ENCODE measurements at regions of chr6 and their contacts with region 1.

Region 1: GRCh38 chr6:47733879-47734558 is 35.6 kb downstream of the ADGRF4 start:
- DNase-seq: peak in 1 of 2 experiments; percentile 54
- H3K4me3 ChIP-seq: no peak overlapping the region
- H3K4me3 Mint-ChIP-seq: no peak overlapping the region
- H3K27ac Mint-ChIP-seq: no peak overlapping the region
- H3K4me1 ChIP-seq: no peaks in the 10 kb centered on the region
- H3K4me1 Mint-ChIP-seq: no peaks in the 10 kb centered on the region
- H3K27me3 ChIP-seq: no peaks in the 10 kb centered on the region
- H3K27me3 Mint-ChIP-seq: no peaks in the 10 kb centered on the region
- CTCF ChIP-seq: peak; percentile 46 to 56

Region 2: GRCh38 chr6:47646567-47647088 is 87.4 kb before region 1 on chr6:
- CTCF ChIA-PET with region 1: interaction called, 3 read pairs
- POLR2A ChIA-PET with region 1: no interaction called
- intact Hi-C with region 1: loop called (anchors 1 kb)
- DNase-seq: no peak
- H3K4me3 ChIP-seq: no peak overlapping the region
- H3K4me3 Mint-ChIP-seq: no peak overlapping the region
- H3K27ac Mint-ChIP-seq: no peak overlapping the region
- H3K4me1 ChIP-seq: peaks cover 26% of the 10 kb centered on the region
- H3K4me1 Mint-ChIP-seq: peaks cover 15% of the 10 kb centered on the region
- H3K27me3 ChIP-seq: no peaks in the 10 kb centered on the region
- H3K27me3 Mint-ChIP-seq: no peaks in the 10 kb centered on the region
- CTCF ChIP-seq: peak in 1 of 2 experiments; percentile 8

Region 3: GRCh38 chr6:47690209-47690608 is 43.8 kb before region 1 on chr6:
- CTCF ChIA-PET with region 1: interaction called, 5 read pairs
- POLR2A ChIA-PET with region 1: no interaction called
- intact Hi-C with region 1: loop called (anchors 1 kb)
- DNase-seq: peak in 1 of 2 experiments; percentile 19
- H3K4me3 ChIP-seq: no peak overlapping the region
- H3K4me3 Mint-ChIP-seq: no peak overlapping the region
- H3K27ac Mint-ChIP-seq: no peak overlapping the region
- H3K4me1 ChIP-seq: no peaks in the 10 kb centered on the region
- H3K4me1 Mint-ChIP-seq: no peaks in the 10 kb centered on the region
- H3K27me3 ChIP-seq: no peaks in the 10 kb centered on the region
- H3K27me3 Mint-ChIP-seq: no peaks in the 10 kb centered on the region
- CTCF ChIP-seq: no peak

Region 4: GRCh38 chr6:47749757-47750156 is 15.7 kb after region 1 on chr6:
- CTCF ChIA-PET with region 1: no interaction called
- POLR2A ChIA-PET with region 1: no interaction called
- intact Hi-C with region 1: no loop called
- DNase-seq: no peak
- H3K4me3 ChIP-seq: no peak overlapping the region
- H3K4me3 Mint-ChIP-seq: no peak overlapping the region
- H3K27ac Mint-ChIP-seq: no peak overlapping the region
- H3K4me1 ChIP-seq: no peaks in the 10 kb centered on the region; the same call in 1 of the 2 replicates
- H3K4me1 Mint-ChIP-seq: peaks cover 7% of the 10 kb centered on the region
- H3K27me3 ChIP-seq: no peaks in the 10 kb centered on the region
- H3K27me3 Mint-ChIP-seq: no peaks in the 10 kb centered on the region
- CTCF ChIP-seq: no peak

Region 5: DNA sequence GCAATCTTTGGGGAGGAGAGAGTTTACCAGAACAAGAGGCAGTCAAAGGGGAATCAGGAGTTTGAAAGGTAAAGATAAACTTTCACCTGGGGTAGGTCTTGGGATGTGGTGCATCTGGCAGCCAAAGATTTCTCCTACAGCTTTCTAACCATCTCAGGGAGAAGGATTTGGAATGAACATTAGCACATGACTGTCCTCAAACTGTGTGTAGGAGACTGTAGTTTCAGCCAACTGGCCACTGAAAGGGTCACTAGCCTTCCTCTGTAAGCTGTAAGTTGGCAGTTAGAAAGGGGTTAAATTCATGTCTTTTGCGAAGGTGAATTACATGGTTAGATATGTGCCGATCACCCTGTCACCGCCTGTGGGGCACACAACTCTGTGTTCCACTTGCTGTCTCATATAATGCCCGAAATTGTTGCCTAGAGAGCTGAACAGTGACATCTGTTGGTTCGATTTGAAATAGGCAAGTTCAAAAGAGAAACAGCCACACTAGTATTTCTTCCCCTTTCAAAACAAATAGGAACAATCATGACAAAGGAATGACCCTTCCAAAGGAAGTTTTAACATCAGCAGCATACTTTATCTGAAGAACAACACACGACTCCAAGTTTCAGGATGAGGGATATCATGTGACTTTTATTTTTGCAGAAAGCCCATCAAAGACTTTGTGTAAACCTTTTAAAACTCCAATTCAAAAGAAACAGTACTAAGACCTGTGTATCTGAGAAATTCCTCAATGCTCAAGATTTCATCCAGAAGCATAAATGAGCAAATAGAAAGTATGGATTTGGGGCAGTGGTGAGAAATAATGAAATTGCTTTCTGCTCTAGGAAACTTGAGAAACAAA is 46.7 kb after region 1 on chr6:
- CTCF ChIA-PET with region 1: interaction called, 4 read pairs
- POLR2A ChIA-PET with region 1: no interaction called
- intact Hi-C with region 1: loop called (anchors 1 kb)
- DNase-seq: peak in 1 of 2 experiments; percentile 55
- H3K4me3 ChIP-seq: no peak overlapping the region
- H3K4me3 Mint-ChIP-seq: peak overlapping the region; percentile 31
- H3K27ac Mint-ChIP-seq: no peak overlapping the region
- H3K4me1 ChIP-seq: no peaks in the 10 kb centered on the region
- H3K4me1 Mint-ChIP-seq: no peaks in the 10 kb centered on the region
- H3K27me3 ChIP-seq: no peaks in the 10 kb centered on the region; the same call in 1 of the 2 replicates
- H3K27me3 Mint-ChIP-seq: peaks cover 3% of the 10 kb centered on the region
- CTCF ChIP-seq: peak; percentile 34 to 64

Region 6: DNA sequence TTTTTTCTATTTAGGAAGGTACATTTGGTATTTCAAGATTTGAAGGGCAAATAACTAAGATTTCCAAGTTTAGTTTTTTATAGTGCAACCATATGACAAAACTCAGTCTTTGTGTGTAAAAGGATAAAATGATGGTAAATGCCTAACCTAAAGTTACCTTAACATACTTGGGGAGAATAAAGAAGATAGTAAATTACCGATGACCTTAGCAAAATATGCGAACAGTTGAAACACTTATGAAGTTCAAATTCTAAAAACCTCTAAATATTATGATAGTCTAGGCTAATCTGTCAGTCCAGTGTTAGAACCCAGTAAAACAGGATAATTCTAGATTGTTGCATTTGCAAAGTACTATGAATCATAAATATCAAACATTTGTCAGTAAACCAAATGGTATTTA is 249.5 kb after region 1 on chr6:
- CTCF ChIA-PET with region 1: no interaction called
- POLR2A ChIA-PET with region 1: no interaction called
- intact Hi-C with region 1: no loop called
- DNase-seq: no peak
- H3K4me3 ChIP-seq: no peak overlapping the region
- H3K4me3 Mint-ChIP-seq: no peak overlapping the region
- H3K27ac Mint-ChIP-seq: no peak overlapping the region
- H3K4me1 ChIP-seq: no peaks in the 10 kb centered on the region
- H3K4me1 Mint-ChIP-seq: no peaks in the 10 kb centered on the region
- H3K27me3 ChIP-seq: no peaks in the 10 kb centered on the region
- H3K27me3 Mint-ChIP-seq: peaks cover 8% of the 10 kb centered on the region
- CTCF ChIP-seq: no peak

Region 7: GRCh38 chr6:48194596-48195295 is 460.7 kb after region 1 on chr6:
- CTCF ChIA-PET with region 1: no interaction called
- POLR2A ChIA-PET with region 1: no interaction called
- intact Hi-C with region 1: no loop called
- DNase-seq: no peak
- H3K4me3 ChIP-seq: no peak overlapping the region
- H3K4me3 Mint-ChIP-seq: no peak overlapping the region
- H3K27ac Mint-ChIP-seq: no peak overlapping the region
- H3K4me1 ChIP-seq: no peaks in the 10 kb centered on the region
- H3K4me1 Mint-ChIP-seq: no peaks in the 10 kb centered on the region
- H3K27me3 ChIP-seq: no peaks in the 10 kb centered on the region
- H3K27me3 Mint-ChIP-seq: no peaks in the 10 kb centered on the region
- CTCF ChIP-seq: no peak

Region 8: DNA sequence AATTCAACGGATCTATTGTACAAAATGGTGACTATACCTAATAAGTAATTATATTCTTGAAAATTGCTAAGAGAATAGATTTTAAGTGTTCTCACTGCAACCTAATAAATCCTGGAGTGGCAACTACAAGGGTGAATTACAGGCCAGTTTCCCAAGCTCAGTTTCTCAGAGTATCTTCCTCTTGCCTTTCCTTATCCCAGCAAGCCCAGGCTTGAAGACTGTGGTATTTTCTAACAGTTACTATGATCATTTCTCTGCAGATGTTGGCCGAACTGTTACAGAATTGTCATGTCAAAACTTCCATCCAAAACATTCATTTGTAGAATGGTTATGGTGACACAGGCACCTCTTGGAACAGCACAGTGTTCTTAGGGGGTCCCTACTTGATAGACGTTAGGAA is 515.1 kb after region 1 on chr6:
- CTCF ChIA-PET with region 1: no interaction called
- POLR2A ChIA-PET with region 1: no interaction called
- intact Hi-C with region 1: no loop called
- DNase-seq: no peak
- H3K4me3 ChIP-seq: no peak overlapping the region
- H3K4me3 Mint-ChIP-seq: no peak overlapping the region
- H3K27ac Mint-ChIP-seq: no peak overlapping the region
- H3K4me1 ChIP-seq: no peaks in the 10 kb centered on the region
- H3K4me1 Mint-ChIP-seq: no peaks in the 10 kb centered on the region
- H3K27me3 ChIP-seq: no peaks in the 10 kb centered on the region
- H3K27me3 Mint-ChIP-seq: peaks cover 2% of the 10 kb centered on the region
- CTCF ChIP-seq: no peak